Mammary epithelial cell (primary cell): ENCODE measurements at regions of chr3 and their contacts with region 1.

Region 1: GRCh38 chr3:111904376-111905241 is 45.5 kb downstream of the PHLDB2 start:
- DNase-seq: peak; percentile 89
- H3K4me3 ChIP-seq: no peak overlapping the region
- H3K27ac ChIP-seq: peak overlapping the region; percentile 85
- H3K4me1 ChIP-seq: peaks cover 37% of the 10 kb centered on the region
- H3K27me3 ChIP-seq: no peaks in the 10 kb centered on the region
- CTCF ChIP-seq: peak; percentile 26 to 51

Region 2: DNA sequence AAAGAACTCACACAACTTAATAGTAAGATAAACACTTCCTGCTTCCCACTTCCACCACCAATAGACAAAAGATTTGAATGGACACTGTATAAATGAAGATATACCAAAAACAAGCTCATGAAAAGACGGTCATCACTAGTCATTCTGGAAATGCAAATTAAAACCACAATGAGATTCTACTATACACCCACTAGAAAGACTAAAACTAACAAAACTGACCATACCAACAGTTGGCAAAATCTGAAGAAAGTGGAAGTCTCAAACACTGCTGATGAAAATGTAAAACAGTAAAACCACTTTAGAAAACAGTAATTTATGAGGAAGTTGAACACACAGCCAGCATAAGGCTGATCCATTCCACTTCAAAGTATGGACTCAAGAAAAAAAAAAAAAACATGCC is 398.2 kb before region 1 on chr3:
- CTCF ChIA-PET with region 1: no interaction called
- dilution Hi-C with region 1: no loop called
- in situ Hi-C with region 1: no loop called
- intact Hi-C with region 1: no loop called
- DNase-seq: no peak
- H3K4me3 ChIP-seq: no peak overlapping the region
- H3K27ac ChIP-seq: no peak overlapping the region
- H3K4me1 ChIP-seq: no peaks in the 10 kb centered on the region
- H3K27me3 ChIP-seq: no peaks in the 10 kb centered on the region
- CTCF ChIP-seq: no peak

Region 3: DNA sequence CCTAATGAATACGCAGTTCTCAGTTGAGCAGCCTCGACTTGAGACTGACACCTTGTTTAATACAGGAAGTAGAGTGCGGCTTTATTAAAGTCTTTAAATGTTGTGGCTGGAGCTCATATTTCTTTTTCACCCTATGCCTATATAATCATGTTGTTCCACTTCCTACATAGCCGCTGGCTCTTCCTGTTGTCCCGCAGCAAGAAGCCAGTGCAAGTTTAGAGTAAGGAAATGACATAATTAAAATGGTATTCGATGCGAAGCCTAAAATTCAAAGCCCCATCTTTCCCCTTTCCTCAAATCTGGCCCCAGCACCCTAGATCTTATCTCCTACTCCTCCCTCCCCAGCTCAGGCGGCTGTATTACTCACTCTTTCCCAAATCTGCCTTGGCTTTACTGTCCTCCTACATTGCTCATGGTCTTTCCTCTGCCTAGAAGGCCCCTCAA is 53.1 kb before region 1 on chr3:
- CTCF ChIA-PET with region 1: no interaction called
- dilution Hi-C with region 1: no loop called
- in situ Hi-C with region 1: no loop called
- intact Hi-C with region 1: no loop called
- DNase-seq: peak; percentile 68
- H3K4me3 ChIP-seq: no peak overlapping the region
- H3K27ac ChIP-seq: peak overlapping the region; percentile 72
- H3K4me1 ChIP-seq: peaks cover 43% of the 10 kb centered on the region
- H3K27me3 ChIP-seq: no peaks in the 10 kb centered on the region
- CTCF ChIP-seq: no peak

Region 4: DNA sequence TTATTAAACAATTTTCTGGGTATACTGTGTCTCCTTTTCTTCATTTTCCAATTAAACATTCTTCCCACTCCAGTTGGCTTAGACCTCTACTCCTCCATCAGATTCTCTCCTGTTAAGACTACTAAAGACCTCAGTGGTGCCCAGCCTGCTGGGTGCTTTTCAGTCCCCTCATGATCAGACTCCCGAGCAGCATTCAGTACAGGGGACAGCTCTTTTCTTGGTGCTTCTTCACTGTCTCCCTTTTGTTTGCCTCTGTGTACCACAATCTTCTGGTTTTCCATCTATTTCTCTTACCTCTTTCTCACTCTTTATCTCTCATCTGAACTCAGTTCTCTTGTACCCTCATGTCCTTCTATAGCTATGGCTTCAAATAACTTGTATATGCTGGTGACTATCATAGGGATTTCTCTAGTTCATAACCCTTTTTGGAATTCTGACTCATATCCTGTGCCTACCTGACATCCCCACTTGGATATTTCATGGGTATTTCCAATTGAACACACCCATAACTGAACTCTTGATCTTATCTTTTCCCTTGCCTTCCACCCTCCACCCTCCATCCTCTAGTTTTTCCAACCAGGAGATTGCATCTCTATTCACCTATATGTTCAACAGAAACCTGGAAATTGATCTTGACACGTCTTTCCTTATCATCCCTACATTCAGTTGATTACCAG is 18.6 kb after region 1 on chr3:
- CTCF ChIA-PET with region 1: no interaction called
- dilution Hi-C with region 1: no loop called
- in situ Hi-C with region 1: no loop called
- intact Hi-C with region 1: loop called (anchors 1 kb)
- DNase-seq: peak; percentile 87
- H3K4me3 ChIP-seq: no peak overlapping the region
- H3K27ac ChIP-seq: peak overlapping the region; percentile 94
- H3K4me1 ChIP-seq: peaks cover 26% of the 10 kb centered on the region
- H3K27me3 ChIP-seq: no peaks in the 10 kb centered on the region
- CTCF ChIP-seq: no peak

Region 5: DNA sequence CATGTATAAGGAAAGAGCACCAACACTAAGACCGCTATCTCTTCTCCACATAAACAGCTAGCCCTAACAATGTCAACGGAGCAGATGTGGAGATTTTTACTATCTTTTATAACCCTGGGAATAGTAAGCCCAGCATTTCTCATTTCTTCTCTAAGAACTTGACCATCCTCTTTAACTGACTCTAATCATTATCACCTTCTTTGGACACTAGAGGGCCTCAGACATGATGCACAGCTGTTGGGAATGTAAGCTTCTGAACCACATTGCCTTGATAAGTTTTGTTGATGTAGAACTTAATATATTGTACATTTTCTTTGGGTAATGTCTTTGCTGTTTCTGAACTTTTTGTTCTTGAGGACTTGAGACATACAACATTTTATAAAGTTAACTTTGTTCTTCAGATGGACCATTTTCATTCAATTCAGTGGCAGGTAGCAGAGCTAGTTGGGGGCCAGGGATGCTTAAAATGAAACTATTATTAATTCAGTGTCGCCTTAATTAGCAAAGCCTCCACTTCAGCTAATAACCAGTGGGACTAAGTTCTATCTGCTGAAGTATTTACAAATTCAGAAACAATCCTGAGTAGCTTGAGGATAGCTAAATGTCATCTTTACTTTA is 84.6 kb after region 1 on chr3:
- CTCF ChIA-PET with region 1: no interaction called
- dilution Hi-C with region 1: no loop called
- in situ Hi-C with region 1: no loop called
- intact Hi-C with region 1: no loop called
- DNase-seq: peak; percentile 55
- H3K4me3 ChIP-seq: no peak overlapping the region
- H3K27ac ChIP-seq: no peak overlapping the region
- H3K4me1 ChIP-seq: no peaks in the 10 kb centered on the region
- H3K27me3 ChIP-seq: no peaks in the 10 kb centered on the region
- CTCF ChIP-seq: peak; percentile 79 to 82